Caco-2 (cell line): ENCODE measurements at regions of chr11 and their contacts with region 1.

Region 1: GRCh38 chr11:76919887-76920746 is 59.4 kb downstream of the ACER3 start:
- DNase-seq: peak; percentile 86 to 91
- H3K4me3 ChIP-seq: no peak overlapping the region
- H3K4me3 Mint-ChIP-seq: no peak overlapping the region
- H3K27ac Mint-ChIP-seq: no peak overlapping the region
- H3K4me1 ChIP-seq: peaks cover 32% of the 10 kb centered on the region
- H3K4me1 Mint-ChIP-seq: peaks cover 25% of the 10 kb centered on the region
- H3K27me3 ChIP-seq: no peaks in the 10 kb centered on the region
- H3K27me3 Mint-ChIP-seq: no peaks in the 10 kb centered on the region
- CTCF ChIP-seq: peak; percentile 95 to 98

Region 2: DNA sequence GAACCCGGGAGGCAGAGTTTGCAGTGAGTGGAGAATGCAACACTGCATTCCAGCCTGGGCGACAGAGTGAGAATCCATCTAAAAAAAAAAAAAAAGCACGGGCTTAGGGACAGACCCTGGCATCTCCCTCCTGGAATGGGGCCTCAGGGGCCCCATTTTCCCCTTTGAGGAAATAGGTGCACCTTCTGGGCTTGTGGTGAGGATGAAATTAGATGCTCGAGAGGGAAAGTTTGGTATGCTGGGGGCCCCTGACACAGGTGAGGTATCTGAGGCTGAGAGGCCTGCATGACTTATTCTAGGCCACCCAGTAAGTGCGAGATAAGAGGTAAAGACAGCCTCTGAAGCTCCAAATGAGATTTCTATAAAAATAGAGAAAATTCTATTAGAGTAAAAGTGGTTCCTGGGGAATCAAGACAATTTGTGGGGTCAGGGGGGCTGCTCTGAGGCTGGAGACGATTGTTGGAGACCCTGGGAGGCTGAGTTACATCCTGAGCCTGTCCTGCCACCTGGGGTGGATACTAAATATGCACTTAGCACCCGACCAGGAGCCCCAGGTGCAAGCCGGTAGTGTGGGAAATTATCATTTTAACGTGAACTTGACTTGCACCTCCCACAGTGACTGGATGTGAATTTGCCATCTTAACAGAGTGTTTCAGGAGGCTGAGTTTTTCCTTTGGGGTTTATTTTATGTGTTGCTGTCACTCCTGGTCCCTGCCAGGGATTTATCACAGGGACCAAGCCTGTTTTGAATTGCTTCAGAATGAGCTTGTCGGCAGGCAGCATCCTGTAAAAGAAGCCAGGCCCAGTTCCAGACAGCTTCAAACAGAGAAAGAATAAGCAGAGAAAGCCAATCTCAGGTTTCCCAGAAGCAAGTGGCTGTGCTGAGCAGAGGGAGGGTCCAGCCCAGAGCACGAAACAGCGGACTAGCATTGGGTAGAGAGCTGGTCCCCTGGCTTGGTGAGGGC is 185.4 kb before region 1 on chr11:
- CTCF ChIA-PET with region 1: interaction called, 132 read pairs
- POLR2A ChIA-PET with region 1: interaction called, 4 read pairs
- intact Hi-C with region 1: loop called (anchors 1 kb)
- DNase-seq: no peak
- H3K4me3 ChIP-seq: no peak overlapping the region
- H3K4me3 Mint-ChIP-seq: no peak overlapping the region
- H3K27ac Mint-ChIP-seq: no peak overlapping the region
- H3K4me1 ChIP-seq: peaks cover 11% of the 10 kb centered on the region
- H3K4me1 Mint-ChIP-seq: peaks cover 9% of the 10 kb centered on the region
- H3K27me3 ChIP-seq: no peaks in the 10 kb centered on the region; the same call in 1 of the 2 replicates
- H3K27me3 Mint-ChIP-seq: no peaks in the 10 kb centered on the region
- CTCF ChIP-seq: no peak

Region 3: GRCh38 chr11:76807206-76807875 is 112.8 kb before region 1 on chr11:
- CTCF ChIA-PET with region 1: interaction called, 29 read pairs
- POLR2A ChIA-PET with region 1: no interaction called
- intact Hi-C with region 1: loop called (anchors 1 kb)
- DNase-seq: peak; percentile 85 to 86
- H3K4me3 ChIP-seq: no peak overlapping the region
- H3K4me3 Mint-ChIP-seq: no peak overlapping the region
- H3K27ac Mint-ChIP-seq: no peak overlapping the region
- H3K4me1 ChIP-seq: peaks cover 8% of the 10 kb centered on the region
- H3K4me1 Mint-ChIP-seq: peaks cover under 1% of the 10 kb centered on the region
- H3K27me3 ChIP-seq: no peaks in the 10 kb centered on the region
- H3K27me3 Mint-ChIP-seq: no peaks in the 10 kb centered on the region
- CTCF ChIP-seq: peak; percentile 86 to 87

Region 4: GRCh38 chr11:76947800-76948199 is 27.7 kb after region 1 on chr11:
- CTCF ChIA-PET with region 1: interaction called, 13 read pairs
- POLR2A ChIA-PET with region 1: no interaction called
- intact Hi-C with region 1: no loop called
- DNase-seq: no peak
- H3K4me3 ChIP-seq: no peak overlapping the region
- H3K4me3 Mint-ChIP-seq: no peak overlapping the region
- H3K27ac Mint-ChIP-seq: no peak overlapping the region
- H3K4me1 ChIP-seq: peaks cover 11% of the 10 kb centered on the region
- H3K4me1 Mint-ChIP-seq: peaks cover 26% of the 10 kb centered on the region
- H3K27me3 ChIP-seq: no peaks in the 10 kb centered on the region
- H3K27me3 Mint-ChIP-seq: no peaks in the 10 kb centered on the region
- CTCF ChIP-seq: no peak

Region 5: GRCh38 chr11:77035039-77035994 is 115.2 kb after region 1 on chr11:
- CTCF ChIA-PET with region 1: interaction called, 45 read pairs
- POLR2A ChIA-PET with region 1: no interaction called
- intact Hi-C with region 1: loop called (anchors 2 kb)
- DNase-seq: peak in 1 of 2 experiments; percentile 46
- H3K4me3 ChIP-seq: no peak overlapping the region
- H3K4me3 Mint-ChIP-seq: peak overlapping the region; percentile 31
- H3K27ac Mint-ChIP-seq: no peak overlapping the region
- H3K4me1 ChIP-seq: peaks cover 28% of the 10 kb centered on the region
- H3K4me1 Mint-ChIP-seq: peaks cover 36% of the 10 kb centered on the region
- H3K27me3 ChIP-seq: no peaks in the 10 kb centered on the region
- H3K27me3 Mint-ChIP-seq: no peaks in the 10 kb centered on the region
- CTCF ChIP-seq: no peak